ENCODE measurements at regions of chr1 and their contacts with region 1.

Region 1: DNA sequence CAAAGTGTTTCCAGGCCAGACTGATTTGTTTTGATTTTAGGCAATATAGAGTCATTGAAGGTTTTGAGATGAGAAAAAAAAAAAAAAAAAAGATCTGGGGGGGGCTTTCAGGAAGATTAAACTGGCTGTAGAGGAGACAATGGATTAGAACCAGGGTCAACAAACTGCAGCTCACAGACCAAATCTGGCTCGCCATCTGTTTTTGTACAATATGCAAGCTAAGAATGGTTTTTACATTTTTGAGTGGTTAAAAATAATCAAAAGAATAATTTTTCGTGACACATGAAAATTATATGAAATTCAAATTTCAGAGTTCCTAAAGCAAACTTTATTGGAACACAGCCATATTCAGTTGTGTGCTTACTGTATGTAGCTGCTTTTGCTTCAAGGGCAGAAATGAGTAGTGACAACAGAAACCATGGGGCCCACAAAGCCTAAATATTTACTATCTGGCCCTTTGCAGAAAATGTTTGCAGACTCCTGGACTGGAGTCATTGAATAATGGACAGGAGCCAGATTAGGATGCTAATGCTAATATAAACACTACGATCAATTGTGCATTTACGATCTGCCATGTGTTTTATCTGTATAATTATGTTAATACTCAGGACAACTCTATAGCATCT is 375.7 kb upstream of the DAB1 start:
- DNase-seq: no peak
- ATAC-seq: no peak
- H3K4me3 ChIP-seq: no peak overlapping the region
- H3K27ac ChIP-seq: no peak overlapping the region
- H3K4me1 ChIP-seq: no peaks in the 10 kb centered on the region
- H3K27me3 ChIP-seq: no peaks in the 10 kb centered on the region
- CTCF ChIP-seq: no peak
- POLR2A ChIP-seq: no peak
- RAD21 ChIP-seq: no peak

Region 2: GRCh38 chr1:57831624-57832023 is 32.0 kb after region 1 on chr1:
- CTCF ChIA-PET with region 1: no interaction called
- POLR2A ChIA-PET with region 1: no interaction called
- dilution Hi-C with region 1: no loop called
- in situ Hi-C with region 1: no loop called
- intact Hi-C with region 1: loop called (anchors 1 kb)
- DNase-seq: no peak
- ATAC-seq: no peak
- H3K4me3 ChIP-seq: no peak overlapping the region
- H3K27ac ChIP-seq: no peak overlapping the region
- H3K4me1 ChIP-seq: no peaks in the 10 kb centered on the region
- H3K27me3 ChIP-seq: no peaks in the 10 kb centered on the region
- CTCF ChIP-seq: no peak
- POLR2A ChIP-seq: no peak
- RAD21 ChIP-seq: no peak

Measured in IMR-90 (cell line).